Cardiac septum (tissue), 1 donor: ENCODE measurements at regions of chr19 and their contacts with region 1.

Region 1: DNA sequence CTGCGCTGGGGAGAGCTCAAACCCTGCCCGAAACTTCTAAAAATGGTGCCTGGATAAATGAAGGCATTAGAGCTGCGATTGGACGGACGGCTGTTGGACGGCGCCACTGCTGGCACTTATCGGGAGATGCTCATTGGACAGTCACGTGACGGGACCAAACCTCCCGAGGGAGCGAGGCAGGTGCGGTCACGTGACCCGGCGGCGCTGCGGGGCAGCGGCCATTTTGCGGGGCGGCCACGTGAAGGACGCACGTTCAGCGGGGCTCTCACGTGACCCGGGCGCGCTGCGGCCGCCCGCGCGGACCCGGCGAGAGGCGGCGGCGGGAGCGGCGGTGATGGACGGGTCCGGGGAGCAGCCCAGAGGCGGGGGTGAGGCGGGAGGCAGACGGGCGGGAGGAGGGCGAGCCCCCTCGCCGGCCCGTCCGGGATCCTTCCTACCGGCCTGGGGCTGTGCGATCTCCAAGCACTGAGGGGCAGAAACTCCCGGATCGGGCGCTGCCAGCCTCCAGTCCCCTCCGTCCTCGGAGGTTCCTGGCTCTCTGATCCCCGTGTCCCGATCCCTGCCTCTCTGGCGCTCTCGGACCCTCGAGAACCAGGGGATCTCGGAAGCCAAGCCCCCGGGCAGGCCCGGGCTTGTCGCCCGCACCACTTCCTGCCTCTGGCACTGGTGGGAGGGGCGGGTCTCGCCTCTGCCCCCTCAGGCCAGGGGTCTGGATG is at the start of gene BAX:
- DNase-seq: peak; percentile 98
- total RNA-seq, gene BAX: 25.6 TPM

Region 2: GRCh38 chr19:48646001-48646721 is 308.6 kb before region 1 on chr19 and contains the start of gene CA11:
- intact Hi-C with region 1: loop called (anchors 5 kb)
- DNase-seq: peak; percentile 92
- total RNA-seq, gene CA11: 6.5 TPM

Region 3: GRCh38 chr19:48872182-48872883 is 82.4 kb before region 1 on chr19 and contains the start of gene PPP1R15A:
- intact Hi-C with region 1: loop called (anchors 5 kb)
- DNase-seq: peak; percentile 100
- total RNA-seq, gene PPP1R15A: 87.0 TPM

Region 4: GRCh38 chr19:48899781-48900476 is 54.8 kb before region 1 on chr19 and contains the start of gene NUCB1:
- intact Hi-C with region 1: loop called (anchors 5 kb)
- DNase-seq: peak; percentile 100
- total RNA-seq, gene NUCB1: 276 TPM